A549 (cell line): ENCODE measurements at regions of chrX and their contacts with region 1.

Region 1: GRCh38 chrX:68828740-68829552 is at the start of gene EFNB1:
- DNase-seq: peak; percentile 80 to 95
- ATAC-seq: peak; percentile 85 to 93
- H3K4me3 ChIP-seq: peak within 1 kb of the TSS; percentile 86
- H3K27ac ChIP-seq: peak within 1 kb of the TSS; percentile 71 to 89
- H3K4me1 ChIP-seq: peaks cover 5% of the 10 kb centered on the region; the same call in 1 of the 3 replicates
- CTCF ChIP-seq: no peak
- EP300 ChIP-seq: no peak
- POLR2A ChIP-seq: peak; percentile 83
- RAD21 ChIP-seq: no peak; a peak in 1 of 5 replicates
- polyA plus RNA-seq, gene EFNB1: 3.7 TPM in 2 replicates

Region 2: GRCh38 chrX:68868902-68869800 is 40.2 kb after region 1 on chrX:
- CTCF ChIA-PET with region 1: interaction called, 10 read pairs
- POLR2A ChIA-PET with region 1: interaction called, 3 read pairs
- DNase-seq: peak in 1 of 2 experiments; percentile 4
- ATAC-seq: peak; percentile 13 to 63; a peak in 3 of 6 replicates
- H3K4me3 ChIP-seq: no peak overlapping the region
- H3K27ac ChIP-seq: peak overlapping the region; percentile 21 to 45; a peak in 1 of 6 replicates
- H3K4me1 ChIP-seq: peaks cover 6% of the 10 kb centered on the region; the same call in 1 of the 3 replicates
- CTCF ChIP-seq: no peak
- EP300 ChIP-seq: no peak
- POLR2A ChIP-seq: no peak
- RAD21 ChIP-seq: no peak

Region 3: GRCh38 chrX:69060631-69061408 is 231.9 kb after region 1 on chrX:
- CTCF ChIA-PET with region 1: interaction called, 12 read pairs
- POLR2A ChIA-PET with region 1: interaction called, 10 read pairs
- DNase-seq: peak in 1 of 2 experiments; percentile 23
- ATAC-seq: peak; percentile 39 to 81; a peak in 3 of 6 replicates
- H3K4me3 ChIP-seq: no peak overlapping the region
- H3K27ac ChIP-seq: no peak overlapping the region
- H3K4me1 ChIP-seq: no peaks in the 10 kb centered on the region
- CTCF ChIP-seq: no peak
- EP300 ChIP-seq: no peak
- POLR2A ChIP-seq: no peak
- RAD21 ChIP-seq: peak; percentile 44 to 58

Region 4: DNA sequence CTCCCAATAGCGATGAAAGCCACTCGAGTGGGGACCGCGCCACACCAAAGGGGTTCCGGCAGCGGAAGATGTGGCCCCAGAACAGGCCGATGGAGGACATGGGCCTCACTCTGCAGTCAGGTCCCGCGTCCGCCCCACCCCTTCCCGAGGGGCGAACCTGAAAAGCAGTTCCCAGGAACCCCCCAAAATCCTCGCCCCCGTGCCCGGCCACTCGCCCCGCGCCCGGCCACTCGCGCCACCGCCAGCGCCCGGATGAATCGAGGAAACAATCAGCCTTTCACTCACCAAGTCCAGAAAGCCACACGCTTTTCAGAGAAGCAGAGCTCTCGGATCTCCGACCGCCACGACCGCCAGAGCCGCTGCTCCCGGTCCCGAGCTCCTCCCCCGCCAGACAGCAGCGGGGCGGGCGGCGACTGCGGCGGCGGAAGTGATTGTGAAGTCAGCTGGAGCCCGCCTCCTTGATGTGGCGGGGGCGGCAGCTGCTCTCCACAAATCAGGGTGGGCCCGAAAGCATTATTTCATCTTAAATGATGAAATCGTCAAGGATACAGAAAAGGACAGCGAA is 336.2 kb after region 1 on chrX and contains the start of gene PJA1:
- CTCF ChIA-PET with region 1: interaction called, 7 read pairs
- POLR2A ChIA-PET with region 1: interaction called, 13 read pairs
- DNase-seq: peak; percentile 54 to 62
- ATAC-seq: peak; percentile 99
- H3K4me3 ChIP-seq: peak within 1 kb of the TSS; percentile 91
- H3K27ac ChIP-seq: peak within 1 kb of the TSS; percentile 80 to 97
- H3K4me1 ChIP-seq: no peaks in the 10 kb centered on the region
- CTCF ChIP-seq: no peak
- EP300 ChIP-seq: no peak
- POLR2A ChIP-seq: peak; percentile 46
- RAD21 ChIP-seq: no peak
- polyA plus RNA-seq, gene PJA1: 16.4 and 20.2 TPM in 2 replicates

Region 5: DNA sequence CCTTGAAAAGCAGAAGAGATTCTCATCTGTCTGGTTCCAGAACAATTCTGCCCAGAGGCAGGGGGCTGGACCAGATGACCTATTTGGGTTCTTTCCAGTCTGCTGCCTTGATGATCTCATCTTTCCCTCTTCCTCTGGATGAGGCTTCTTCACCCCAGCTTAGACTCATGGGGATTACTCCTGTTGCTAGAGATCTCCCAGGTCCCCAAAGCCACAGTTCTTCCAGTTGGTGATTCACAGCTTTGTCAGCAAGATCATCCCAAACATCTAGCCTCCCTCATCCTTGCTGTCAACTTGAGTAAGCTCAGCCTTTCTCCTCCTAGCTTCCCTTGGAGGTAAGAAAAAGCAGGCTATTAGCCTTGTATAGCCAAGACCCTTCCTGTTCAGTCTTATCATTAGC is 400.5 kb after region 1 on chrX:
- CTCF ChIA-PET with region 1: interaction called, 327 read pairs
- POLR2A ChIA-PET with region 1: no interaction called
- DNase-seq: no peak
- ATAC-seq: no peak
- H3K4me3 ChIP-seq: no peak overlapping the region
- H3K27ac ChIP-seq: no peak overlapping the region
- H3K4me1 ChIP-seq: no peaks in the 10 kb centered on the region
- CTCF ChIP-seq: no peak
- EP300 ChIP-seq: no peak
- POLR2A ChIP-seq: no peak
- RAD21 ChIP-seq: no peak

Region 6: DNA sequence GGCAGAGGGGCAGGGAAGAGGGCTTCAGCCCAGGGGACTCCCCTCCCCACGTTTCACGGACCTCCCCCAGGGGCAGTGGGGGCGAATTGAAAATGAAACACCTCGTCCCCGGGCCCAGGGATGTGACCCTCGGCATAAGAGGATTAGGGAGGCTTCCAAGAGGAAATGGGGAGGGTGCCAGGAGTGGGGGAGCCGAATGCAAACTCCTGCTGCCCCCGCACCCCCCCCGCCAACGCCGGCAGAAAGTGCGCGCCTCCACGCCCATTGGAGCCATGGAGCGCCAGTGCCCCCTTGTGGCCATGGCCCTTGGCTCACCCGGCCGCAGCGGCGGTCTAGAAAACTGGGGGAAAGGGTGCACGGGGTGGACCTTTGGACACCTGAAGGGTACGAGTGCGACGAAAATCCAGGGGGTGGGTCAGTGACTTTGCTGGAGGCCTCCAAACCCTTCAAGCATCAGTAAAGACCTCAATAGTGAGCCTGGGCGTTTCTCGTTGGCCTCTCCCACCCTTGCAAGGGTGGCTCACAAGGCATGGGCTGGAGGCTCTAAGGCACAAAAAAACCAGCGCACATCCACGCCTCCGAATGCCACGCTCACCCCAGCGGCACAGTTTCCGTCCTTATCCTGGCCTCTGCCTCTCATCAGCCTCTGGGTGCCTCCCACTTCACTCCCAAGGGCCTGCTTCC is 457.1 kb after region 1 on chrX:
- CTCF ChIA-PET with region 1: interaction called, 91 read pairs
- POLR2A ChIA-PET with region 1: interaction called, 3 read pairs
- DNase-seq: peak; percentile 21 to 67
- ATAC-seq: peak; percentile 74 to 92; a peak in 4 of 6 replicates
- H3K4me3 ChIP-seq: peak overlapping the region; percentile 48
- H3K27ac ChIP-seq: peak overlapping the region; percentile 60 to 82; a peak in 5 of 6 replicates
- H3K4me1 ChIP-seq: no peaks in the 10 kb centered on the region
- CTCF ChIP-seq: peak; percentile 56
- EP300 ChIP-seq: no peak
- POLR2A ChIP-seq: no peak
- RAD21 ChIP-seq: peak; percentile 81 to 87